Activated CD4-positive, alpha-beta memory T cell treated with anti-CD3 and anti-CD28 coated beads, Interleukin-2, amount 10 ng/mL, durations not matched to agents 7 days and 5 days (primary cell): ENCODE measurements at regions of chr22 and their contacts with region 1.

Region 1: GRCh38 chr22:26642465-26643417 is 14.6 kb upstream of the MIAT start:
- DNase-seq: peak; percentile 89
- H3K4me3 Mint-ChIP-seq: peak overlapping the region; percentile 53
- H3K27ac Mint-ChIP-seq: peak overlapping the region; percentile 94
- H3K4me1 Mint-ChIP-seq: peaks cover 85% of the 10 kb centered on the region
- H3K27me3 Mint-ChIP-seq: no peaks in the 10 kb centered on the region

Region 2: GRCh38 chr22:26511857-26512793 is 130.6 kb before region 1 on chr22 and contains the start of gene TFIP11:
- CTCF ChIA-PET with region 1: no interaction called
- POLR2A ChIA-PET with region 1: interaction called, 18 read pairs
- DNase-seq: peak; percentile 93
- H3K4me3 Mint-ChIP-seq: peak within 1 kb of the TSS; percentile 100
- H3K27ac Mint-ChIP-seq: peak within 1 kb of the TSS; percentile 89
- H3K4me1 Mint-ChIP-seq: peaks cover 53% of the 10 kb centered on the region
- H3K27me3 Mint-ChIP-seq: no peaks in the 10 kb centered on the region
- total RNA-seq, gene TFIP11: 50.8 to 55.5 TPM

Region 3: DNA sequence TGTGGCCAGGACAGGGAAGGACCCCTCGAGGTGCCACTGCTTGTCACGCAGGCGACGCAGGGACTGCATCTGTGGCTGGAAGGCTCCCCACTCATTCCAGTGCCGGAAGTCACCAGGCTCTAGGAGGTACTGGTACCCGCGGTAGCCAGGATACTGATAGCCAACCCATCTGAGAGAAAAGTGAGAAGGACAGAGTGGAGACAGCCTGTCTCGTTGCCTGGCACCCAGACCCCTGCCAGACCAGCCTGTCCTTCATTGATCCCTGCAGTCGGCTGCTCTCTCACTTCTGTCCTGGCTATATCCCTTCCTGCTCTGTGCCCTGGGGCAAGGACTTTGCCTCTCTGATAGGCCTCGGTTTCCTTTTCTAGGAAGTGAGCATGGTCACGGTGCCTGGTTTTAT is 43.2 kb before region 1 on chr22:
- CTCF ChIA-PET with region 1: no interaction called
- POLR2A ChIA-PET with region 1: no interaction called
- DNase-seq: no peak
- H3K4me3 Mint-ChIP-seq: no peak overlapping the region
- H3K27ac Mint-ChIP-seq: no peak overlapping the region
- H3K4me1 Mint-ChIP-seq: peaks cover 27% of the 10 kb centered on the region
- H3K27me3 Mint-ChIP-seq: peaks cover 11% of the 10 kb centered on the region

Region 4: GRCh38 chr22:26610072-26610958 is 32.4 kb before region 1 on chr22:
- CTCF ChIA-PET with region 1: interaction called, 5 read pairs
- POLR2A ChIA-PET with region 1: interaction called, 10 read pairs
- DNase-seq: peak; percentile 84
- H3K4me3 Mint-ChIP-seq: peak overlapping the region; percentile 56
- H3K27ac Mint-ChIP-seq: peak overlapping the region; percentile 85
- H3K4me1 Mint-ChIP-seq: peaks cover 38% of the 10 kb centered on the region
- H3K27me3 Mint-ChIP-seq: peaks cover 22% of the 10 kb centered on the region

Region 5: GRCh38 chr22:26624788-26625187 is 18.0 kb before region 1 on chr22:
- CTCF ChIA-PET with region 1: interaction called, 10 read pairs
- POLR2A ChIA-PET with region 1: interaction called, 3 read pairs
- DNase-seq: no peak
- H3K4me3 Mint-ChIP-seq: no peak overlapping the region
- H3K27ac Mint-ChIP-seq: no peak overlapping the region
- H3K4me1 Mint-ChIP-seq: peaks cover 22% of the 10 kb centered on the region
- H3K27me3 Mint-ChIP-seq: peaks cover 5% of the 10 kb centered on the region

Region 6: GRCh38 chr22:26711205-26711963 is 68.6 kb after region 1 on chr22:
- CTCF ChIA-PET with region 1: no interaction called
- POLR2A ChIA-PET with region 1: no interaction called
- DNase-seq: peak; percentile 17
- H3K4me3 Mint-ChIP-seq: no peak overlapping the region
- H3K27ac Mint-ChIP-seq: no peak overlapping the region
- H3K4me1 Mint-ChIP-seq: peaks cover 14% of the 10 kb centered on the region
- H3K27me3 Mint-ChIP-seq: no peaks in the 10 kb centered on the region

Region 7: DNA sequence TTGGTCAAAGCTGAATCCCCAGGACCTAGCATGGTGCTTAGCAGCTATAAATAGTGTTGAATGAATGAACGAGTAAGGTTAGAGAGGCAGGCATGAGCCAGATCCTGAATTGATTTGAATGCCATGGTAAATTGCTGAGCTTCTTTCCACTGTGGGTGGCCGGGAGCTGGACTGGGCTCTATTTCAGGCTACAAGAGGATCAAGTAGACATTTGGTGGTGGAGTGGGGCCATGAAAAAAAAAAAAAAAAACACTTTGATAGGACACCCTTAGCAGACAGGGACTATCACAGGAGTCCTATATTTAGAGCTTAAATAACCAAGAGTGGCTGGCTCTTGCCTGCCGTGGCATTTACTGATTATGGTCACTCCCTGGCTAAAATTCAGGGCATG is 92.3 kb after region 1 on chr22:
- CTCF ChIA-PET with region 1: no interaction called
- POLR2A ChIA-PET with region 1: no interaction called
- DNase-seq: no peak
- H3K4me3 Mint-ChIP-seq: no peak overlapping the region
- H3K27ac Mint-ChIP-seq: no peak overlapping the region
- H3K4me1 Mint-ChIP-seq: no peaks in the 10 kb centered on the region
- H3K27me3 Mint-ChIP-seq: no peaks in the 10 kb centered on the region